ENCODE measurements at regions of chr5 and their contacts with region 1.

Region 1: DNA sequence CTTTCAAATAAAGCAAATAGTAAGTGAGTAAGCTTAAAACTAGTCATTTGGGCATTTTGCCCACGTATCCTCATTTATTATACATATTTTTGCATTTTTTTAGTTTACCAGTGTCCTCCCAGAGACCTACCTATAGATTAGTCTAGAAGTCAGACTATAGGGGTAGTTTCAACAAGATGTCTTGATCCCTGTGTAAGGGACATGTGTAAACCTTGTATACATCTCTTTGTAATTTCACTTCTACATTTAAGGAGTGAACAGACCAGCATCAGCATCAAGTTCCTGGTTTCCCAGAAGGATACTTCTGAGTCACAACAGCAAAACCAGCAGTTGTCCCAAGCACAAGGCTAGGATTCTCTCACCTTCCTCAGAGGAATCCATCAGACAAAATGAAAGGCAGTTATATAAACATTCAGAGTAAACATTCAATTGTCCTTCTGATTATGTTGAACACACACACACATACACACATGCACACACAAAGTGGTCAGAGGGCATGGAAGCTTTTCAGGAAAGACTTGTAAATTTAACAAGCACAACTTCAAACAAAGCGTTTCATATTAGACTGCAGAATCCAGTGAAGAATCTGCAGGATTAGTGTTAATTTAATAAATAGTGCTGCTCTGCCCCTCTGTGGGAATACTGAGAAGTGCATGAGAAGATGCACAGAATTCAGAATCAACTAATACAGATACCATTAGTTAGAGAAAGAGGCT is 55.4 kb downstream of the HINT1 start:
- DNase-seq: peak in 22 of 42 donors; percentile 17 to 81 (median 55)

Region 2: DNA sequence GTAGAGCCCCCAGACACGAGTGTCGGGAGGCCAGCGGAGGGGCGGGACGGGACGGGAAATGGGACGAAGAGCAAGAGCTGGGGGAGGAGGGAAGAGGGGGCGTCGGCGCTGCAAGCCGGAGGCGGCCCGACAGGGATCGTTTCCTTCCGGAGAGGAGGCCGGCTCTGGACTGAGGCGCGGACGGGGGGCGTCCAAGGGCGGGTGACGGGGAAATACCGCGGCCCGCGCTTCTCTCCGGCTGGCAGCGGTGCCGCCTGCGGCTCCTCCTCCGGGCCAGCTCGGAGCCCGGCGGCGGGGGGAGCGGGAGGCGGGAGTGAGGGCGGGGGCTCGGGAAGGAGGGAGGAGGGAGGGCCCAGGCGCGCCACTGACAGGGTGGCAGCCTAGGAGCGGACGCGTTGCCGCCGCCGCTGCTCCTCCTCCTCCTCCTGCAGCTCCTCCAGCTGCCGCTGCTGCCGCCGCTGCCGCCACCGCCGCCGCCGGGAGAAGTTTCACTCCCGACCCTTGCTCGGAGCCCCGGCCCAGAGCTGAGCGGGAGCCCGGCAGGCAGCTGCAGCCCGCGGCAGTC is 1205.5 kb before region 1 on chr5 and contains the start of gene CHSY3:
- intact Hi-C with region 1: loop called (anchors 10 kb)
- DNase-seq: peak; percentile 56 to 96 (median 90)

Region 3: GRCh38 chr5:131357739-131358561 is 248.3 kb after region 1 on chr5:
- intact Hi-C with region 1: no loop called
- DNase-seq: peak in 30 of 42 donors; percentile 14 to 78 (median 42)

Measured in head of caudate nucleus (tissue), 42 donors.